ENCODE measurements at regions of chr10 and their contacts with region 1.

Region 1: DNA sequence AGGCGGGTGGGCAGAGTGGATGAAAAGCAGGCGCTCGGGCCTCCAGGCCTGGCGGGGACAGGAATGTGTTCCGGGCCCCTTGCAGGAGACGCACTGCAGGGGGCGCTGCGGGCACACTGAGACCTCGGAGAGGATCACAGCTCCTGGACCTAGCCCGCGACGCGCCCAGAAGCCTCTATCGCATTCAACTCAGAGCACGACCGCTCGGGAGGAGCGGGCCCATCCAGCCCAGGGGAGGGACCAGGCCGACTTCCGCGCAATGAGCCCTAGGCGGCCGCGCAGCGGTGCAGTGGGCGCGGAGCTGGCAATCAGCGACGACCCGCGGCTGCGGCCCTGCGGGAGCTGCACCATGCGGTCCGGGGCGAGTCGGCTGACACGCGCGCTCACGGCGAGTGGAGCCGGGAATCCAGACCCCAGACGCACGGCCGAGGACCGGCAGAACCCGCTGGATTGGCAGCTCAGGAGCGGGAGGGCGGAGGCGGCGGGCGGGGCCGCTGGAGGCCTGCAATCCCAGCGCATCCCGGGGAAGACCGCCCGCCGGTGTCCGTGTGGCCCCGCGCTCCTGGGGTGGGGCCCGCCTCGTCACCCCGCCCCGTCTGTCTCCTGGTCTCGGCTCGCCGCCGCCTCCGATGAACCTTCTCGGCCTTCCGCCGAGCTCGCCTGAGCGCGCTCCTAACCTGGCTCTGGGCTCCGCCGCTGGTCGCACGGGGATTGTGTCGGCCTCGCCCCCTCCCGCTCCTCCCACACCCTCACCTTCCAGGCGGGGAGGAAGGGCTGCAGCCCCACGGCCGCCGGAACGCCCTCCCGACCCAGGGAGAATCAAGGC is 33.5 kb upstream of the GRID1 start:
- DNase-seq: peak; percentile 90 to 98 (median 93)
- ATAC-seq: peak; percentile 79
- H3K4me3 ChIP-seq: peak overlapping the region; percentile 88
- H3K4me3 Mint-ChIP-seq: peak overlapping the region; percentile 88
- H3K27ac ChIP-seq: peak overlapping the region; percentile 63 to 72
- H3K27ac Mint-ChIP-seq: peak overlapping the region; percentile 90
- H3K4me1 ChIP-seq: peaks cover 30% of the 10 kb centered on the region
- H3K4me1 Mint-ChIP-seq: peaks cover 28% of the 10 kb centered on the region
- H3K27me3 ChIP-seq: no peaks in the 10 kb centered on the region
- H3K27me3 Mint-ChIP-seq: no peaks in the 10 kb centered on the region
- CTCF ChIP-seq: peak; percentile 90

Region 2: GRCh38 chr10:86411281-86411841 is 11.3 kb after region 1 on chr10:
- CTCF ChIA-PET with region 1: interaction called, 31 read pairs
- POLR2A ChIA-PET with region 1: interaction called, 131 read pairs
- intact Hi-C with region 1: loop called in 1 of 2 experiments (anchors 1 kb)
- DNase-seq: peak in 7 of 14 experiments; percentile 15 to 65 (median 50)
- ATAC-seq: peak; percentile 55
- H3K4me3 ChIP-seq: peak overlapping the region; percentile 1
- H3K4me3 Mint-ChIP-seq: peak overlapping the region; percentile 83
- H3K27ac ChIP-seq: peak overlapping the region; percentile 54
- H3K27ac Mint-ChIP-seq: peak overlapping the region; percentile 89
- H3K4me1 ChIP-seq: peaks cover 47% of the 10 kb centered on the region
- H3K4me1 Mint-ChIP-seq: peaks cover 60% of the 10 kb centered on the region
- H3K27me3 ChIP-seq: no peaks in the 10 kb centered on the region
- H3K27me3 Mint-ChIP-seq: no peaks in the 10 kb centered on the region
- CTCF ChIP-seq: no peak

Region 3: DNA sequence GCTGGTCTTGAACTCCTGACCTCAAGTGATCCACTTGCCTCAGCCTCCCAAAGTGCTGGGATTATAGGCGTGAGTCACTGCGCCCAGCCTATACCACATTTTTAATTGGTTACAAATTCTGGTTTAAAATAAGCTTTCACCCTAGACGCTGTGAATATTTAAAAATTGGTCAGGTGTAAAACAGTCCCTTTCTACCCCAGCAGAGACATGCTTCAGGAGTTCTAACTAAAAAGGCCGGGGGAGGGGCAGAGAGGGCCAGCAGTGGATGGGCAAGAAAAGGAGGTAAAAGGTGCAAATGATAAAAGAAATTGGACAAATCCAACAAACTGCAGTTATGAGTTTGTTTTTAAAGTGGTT is 51.5 kb after region 1 on chr10:
- CTCF ChIA-PET with region 1: no interaction called
- POLR2A ChIA-PET with region 1: interaction called, 5 read pairs
- intact Hi-C with region 1: loop called (anchors 5 kb)
- DNase-seq: no peak
- ATAC-seq: no peak
- H3K4me3 ChIP-seq: no peak overlapping the region
- H3K4me3 Mint-ChIP-seq: no peak overlapping the region
- H3K27ac ChIP-seq: no peak overlapping the region
- H3K27ac Mint-ChIP-seq: peak overlapping the region; percentile 53
- H3K4me1 ChIP-seq: peaks cover 3% of the 10 kb centered on the region
- H3K4me1 Mint-ChIP-seq: peaks cover 38% of the 10 kb centered on the region
- H3K27me3 ChIP-seq: no peaks in the 10 kb centered on the region
- H3K27me3 Mint-ChIP-seq: no peaks in the 10 kb centered on the region
- CTCF ChIP-seq: no peak

Region 4: GRCh38 chr10:86481761-86482160 is 81.7 kb after region 1 on chr10:
- CTCF ChIA-PET with region 1: interaction called, 4 read pairs
- POLR2A ChIA-PET with region 1: interaction called, 7 read pairs
- intact Hi-C with region 1: loop called in 1 of 2 experiments (anchors 5 kb)
- DNase-seq: no peak
- ATAC-seq: no peak
- H3K4me3 ChIP-seq: no peak overlapping the region
- H3K4me3 Mint-ChIP-seq: no peak overlapping the region
- H3K27ac ChIP-seq: no peak overlapping the region
- H3K27ac Mint-ChIP-seq: no peak overlapping the region
- H3K4me1 ChIP-seq: peaks cover 3% of the 10 kb centered on the region
- H3K4me1 Mint-ChIP-seq: peaks cover 14% of the 10 kb centered on the region
- H3K27me3 ChIP-seq: no peaks in the 10 kb centered on the region
- H3K27me3 Mint-ChIP-seq: no peaks in the 10 kb centered on the region
- CTCF ChIP-seq: no peak

Region 5: DNA sequence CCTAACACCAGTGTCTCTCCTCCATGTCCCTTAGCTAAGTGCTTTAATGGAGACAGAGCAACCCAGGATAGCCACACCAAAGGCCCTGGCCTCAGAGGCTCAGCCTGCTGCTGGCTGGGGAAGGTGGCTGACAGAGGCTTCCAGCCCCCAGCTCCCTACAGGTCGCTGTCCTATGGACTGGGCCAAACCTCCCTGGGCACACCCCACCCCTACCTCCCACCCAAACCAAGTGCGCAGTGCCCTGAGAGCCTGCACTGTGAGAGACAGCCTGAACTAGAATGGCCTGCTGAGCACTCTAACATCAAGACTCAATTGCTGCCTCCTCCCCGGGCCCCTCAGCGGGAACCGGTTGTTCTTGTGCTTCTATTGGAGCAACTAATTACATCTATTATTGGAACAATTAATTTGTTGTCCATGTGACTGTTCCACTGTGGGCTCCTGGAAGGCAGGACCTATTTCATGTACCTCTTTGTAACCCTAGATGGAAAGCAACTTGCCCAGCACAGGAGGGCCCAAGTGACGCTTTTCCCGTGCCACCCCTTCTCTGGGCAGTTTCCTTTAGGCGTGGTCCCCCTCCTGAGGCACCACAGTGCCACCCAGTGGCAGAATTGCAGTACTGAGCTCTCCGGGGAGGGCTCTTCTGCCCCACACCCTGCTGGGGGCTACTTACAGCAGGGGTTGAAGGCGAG is 185.1 kb after region 1 on chr10:
- CTCF ChIA-PET with region 1: interaction called, 58 read pairs
- POLR2A ChIA-PET with region 1: interaction called, 33 read pairs
- intact Hi-C with region 1: loop called (anchors 1 kb)
- DNase-seq: peak; percentile 56 to 86 (median 67)
- ATAC-seq: peak; percentile 97
- H3K4me3 ChIP-seq: no peak overlapping the region
- H3K4me3 Mint-ChIP-seq: no peak overlapping the region
- H3K27ac ChIP-seq: no peak overlapping the region
- H3K27ac Mint-ChIP-seq: no peak overlapping the region
- H3K4me1 ChIP-seq: peaks cover 8% of the 10 kb centered on the region
- H3K4me1 Mint-ChIP-seq: peaks cover 5% of the 10 kb centered on the region
- H3K27me3 ChIP-seq: no peaks in the 10 kb centered on the region
- H3K27me3 Mint-ChIP-seq: no peaks in the 10 kb centered on the region
- CTCF ChIP-seq: peak; percentile 96

Region 6: GRCh38 chr10:86960003-86960862 is 560.1 kb after region 1 on chr10:
- CTCF ChIA-PET with region 1: no interaction called
- POLR2A ChIA-PET with region 1: no interaction called
- intact Hi-C with region 1: loop called (anchors 10 kb)
- DNase-seq: peak in 5 of 14 experiments; percentile 32 to 77 (median 61)
- ATAC-seq: peak; percentile 91
- H3K4me3 ChIP-seq: no peak overlapping the region
- H3K4me3 Mint-ChIP-seq: no peak overlapping the region
- H3K27ac ChIP-seq: no peak overlapping the region
- H3K27ac Mint-ChIP-seq: no peak overlapping the region
- H3K4me1 ChIP-seq: peaks cover 41% of the 10 kb centered on the region
- H3K4me1 Mint-ChIP-seq: peaks cover 4% of the 10 kb centered on the region
- H3K27me3 ChIP-seq: no peaks in the 10 kb centered on the region
- H3K27me3 Mint-ChIP-seq: peaks cover 3% of the 10 kb centered on the region
- CTCF ChIP-seq: no peak